ENCODE measurements at regions of chr11 and their contacts with region 1.

Region 1: GRCh38 chr11:30143098-30143705 is 87.6 kb upstream of the FSHB start:
- DNase-seq: no peak
- ATAC-seq: peak; percentile 48 to 56
- H3K4me3 ChIP-seq: no peak overlapping the region
- H3K27ac ChIP-seq: no peak overlapping the region
- H3K4me1 ChIP-seq: no peaks in the 10 kb centered on the region
- H3K27me3 ChIP-seq: no peaks in the 10 kb centered on the region
- CTCF ChIP-seq: peak; percentile 68

Region 2: GRCh38 chr11:29432719-29433325 is 710.4 kb before region 1 on chr11:
- intact Hi-C with region 1: loop called (anchors 10 kb)
- DNase-seq: no peak
- ATAC-seq: no peak
- H3K4me3 ChIP-seq: no peak overlapping the region
- H3K27ac ChIP-seq: no peak overlapping the region
- H3K4me1 ChIP-seq: no peaks in the 10 kb centered on the region
- H3K27me3 ChIP-seq: no peaks in the 10 kb centered on the region
- CTCF ChIP-seq: peak; percentile 50

Region 3: DNA sequence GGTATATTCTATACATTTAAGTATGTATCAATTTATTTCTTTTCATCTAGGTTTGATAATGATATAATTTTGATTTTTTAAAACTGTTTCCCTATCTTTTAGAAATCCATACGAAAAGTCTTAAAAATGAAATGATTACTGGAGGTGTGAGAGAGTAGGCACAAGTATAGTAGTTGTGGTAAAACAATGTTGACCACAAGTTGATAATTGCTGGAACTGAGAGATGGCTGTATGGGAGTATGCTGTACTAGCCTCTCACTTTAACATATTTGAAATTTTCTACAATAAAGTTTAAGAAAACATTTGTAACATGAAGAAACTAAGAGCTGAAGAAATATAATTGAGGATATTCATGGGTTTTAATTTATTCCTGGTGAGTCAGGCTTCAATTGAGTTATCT is 117.6 kb after region 1 on chr11:
- intact Hi-C with region 1: no loop called
- DNase-seq: no peak
- ATAC-seq: no peak
- H3K4me3 ChIP-seq: no peak overlapping the region
- H3K27ac ChIP-seq: no peak overlapping the region
- H3K4me1 ChIP-seq: no peaks in the 10 kb centered on the region
- H3K27me3 ChIP-seq: no peaks in the 10 kb centered on the region
- CTCF ChIP-seq: no peak

Measured in lower lobe of right lung (tissue), 2 donors.